Activated CD8-positive, alpha-beta T cell treated with anti-CD3 and anti-CD28 coated beads for 36 hours (primary cell): ENCODE measurements at regions of chr7 and their contacts with region 1.

Region 1: DNA sequence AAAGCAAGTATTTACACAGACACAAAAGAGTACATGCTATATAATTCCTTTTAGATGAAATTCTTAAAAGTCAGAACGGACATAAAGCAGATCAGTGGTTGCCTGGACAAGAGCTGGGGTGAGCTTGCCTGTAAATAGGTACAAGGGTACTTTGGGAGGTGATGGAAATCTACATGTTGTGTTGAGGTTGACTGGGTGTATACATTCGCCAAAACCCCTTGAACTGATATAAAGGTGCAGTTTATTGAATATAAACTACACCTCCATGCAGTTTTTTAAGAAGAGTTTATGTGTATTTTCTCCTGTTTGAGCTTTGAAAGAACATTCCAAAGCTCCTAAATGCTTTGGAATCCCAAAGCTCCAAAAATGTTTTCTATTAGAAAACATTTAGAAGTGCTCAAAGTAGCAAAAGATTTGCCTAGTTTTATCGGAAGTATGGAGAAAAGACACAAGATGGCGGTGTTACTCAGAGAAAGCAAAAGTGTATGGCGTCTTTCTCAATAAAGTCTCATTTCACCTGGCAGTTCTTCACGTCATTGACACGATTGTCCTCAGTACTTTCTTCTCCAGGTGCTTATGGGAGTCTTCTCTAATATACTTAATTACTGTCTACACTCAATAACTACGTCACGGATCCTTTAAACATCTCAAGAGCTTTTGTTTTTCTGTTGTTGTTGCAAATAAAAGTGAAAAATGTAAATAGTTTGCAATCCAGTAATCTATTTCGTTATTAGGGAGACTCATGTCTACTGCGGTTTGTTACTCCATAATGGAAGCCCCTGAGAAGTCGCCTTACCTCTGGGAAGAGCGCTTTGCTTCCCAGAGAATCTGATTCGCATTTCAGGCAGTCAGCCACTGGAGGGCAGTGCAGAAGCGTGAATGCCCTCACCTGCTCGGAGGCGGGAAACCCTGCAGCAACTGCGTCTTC is 14.7 kb upstream of the SEC61G start:
- DNase-seq: peak; percentile 77
- ATAC-seq: peak; percentile 81
- H3K4me3 Mint-ChIP-seq: peak overlapping the region; percentile 59
- H3K27ac Mint-ChIP-seq: no peak overlapping the region
- H3K4me1 Mint-ChIP-seq: no peaks in the 10 kb centered on the region
- H3K27me3 Mint-ChIP-seq: peaks cover 20% of the 10 kb centered on the region
- CTCF ChIP-seq: peak; percentile 87

Region 2: GRCh38 chr7:54758702-54759592 is 14.8 kb before region 1 on chr7 and contains the start of gene SEC61G:
- CTCF ChIA-PET with region 1: interaction called, 35 read pairs
- POLR2A ChIA-PET with region 1: interaction called, 6 read pairs
- intact Hi-C with region 1: no loop called
- DNase-seq: peak; percentile 97
- ATAC-seq: peak; percentile 94
- H3K4me3 Mint-ChIP-seq: peak within 1 kb of the TSS; percentile 100
- H3K27ac Mint-ChIP-seq: peak within 1 kb of the TSS; percentile 96
- H3K4me1 Mint-ChIP-seq: peaks cover 25% of the 10 kb centered on the region
- H3K27me3 Mint-ChIP-seq: no peaks in the 10 kb centered on the region
- CTCF ChIP-seq: no peak
- total RNA-seq, gene SEC61G: 162 to 172 TPM

Region 3: GRCh38 chr7:54788664-54789063 is 14.9 kb after region 1 on chr7:
- CTCF ChIA-PET with region 1: interaction called, 11 read pairs
- POLR2A ChIA-PET with region 1: no interaction called
- intact Hi-C with region 1: no loop called
- DNase-seq: peak; percentile 58
- ATAC-seq: peak; percentile 98
- H3K4me3 Mint-ChIP-seq: no peak overlapping the region
- H3K27ac Mint-ChIP-seq: no peak overlapping the region
- H3K4me1 Mint-ChIP-seq: peaks cover 6% of the 10 kb centered on the region
- H3K27me3 Mint-ChIP-seq: peaks cover 26% of the 10 kb centered on the region
- CTCF ChIP-seq: peak; percentile 31